HCT116 (cell line): ENCODE measurements at regions of chr18 and their contacts with region 1.

Region 1: DNA sequence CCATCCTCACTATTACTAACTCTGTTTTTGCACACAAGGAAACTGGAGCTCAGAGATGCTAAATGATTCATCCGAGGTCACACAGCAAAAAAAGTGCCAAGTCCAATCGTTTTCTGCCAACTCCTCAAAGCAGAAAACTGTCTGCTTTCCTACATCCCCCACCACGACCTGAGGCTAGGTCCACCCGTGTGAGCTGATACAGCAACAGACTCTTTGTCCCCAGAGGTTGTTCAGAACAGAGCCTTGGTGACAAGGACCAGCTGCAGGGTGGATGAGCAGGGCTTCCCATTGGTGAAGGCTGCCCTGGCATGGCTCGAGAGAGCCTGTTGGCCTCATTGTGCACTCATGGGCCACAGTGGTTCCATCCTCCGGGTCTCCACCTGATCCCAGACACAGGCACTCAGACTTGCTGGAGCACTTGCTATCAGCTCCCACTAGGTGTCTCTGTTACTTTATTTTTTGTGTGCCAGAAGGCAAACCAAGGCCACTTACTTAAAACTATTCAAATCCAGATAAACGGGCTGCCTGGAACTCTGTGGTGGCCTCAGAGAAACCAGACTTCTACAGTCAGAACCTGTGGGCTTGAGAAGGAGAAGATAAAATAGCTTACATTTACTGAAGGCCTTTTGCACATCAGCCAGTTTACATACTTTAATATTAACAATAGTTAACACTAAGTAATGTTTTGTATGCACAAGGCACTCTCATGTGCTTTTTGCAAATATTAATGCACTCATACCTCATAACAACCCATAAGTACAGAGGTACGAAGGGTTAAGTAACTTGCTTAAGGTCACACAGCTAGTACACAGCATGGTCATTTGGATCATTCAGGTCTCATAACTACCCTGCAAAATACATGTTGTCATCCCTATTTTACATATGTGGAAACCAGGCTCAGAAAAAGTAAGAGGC is 62.9 kb upstream of the CTIF start:
- DNase-seq: peak; percentile 67
- ATAC-seq: peak; percentile 98
- H3K4me3 ChIP-seq: no peak overlapping the region
- H3K27ac ChIP-seq: no peak overlapping the region
- H3K4me1 ChIP-seq: no peaks in the 10 kb centered on the region
- H3K27me3 ChIP-seq: no peaks in the 10 kb centered on the region
- CTCF ChIP-seq: peak; percentile 81 to 93 (median 90)
- POLR2A ChIP-seq: no peak
- RAD21 ChIP-seq: peak; percentile 95

Region 2: GRCh38 chr18:48293954-48294898 is 181.7 kb before region 1 on chr18:
- CTCF ChIA-PET with region 1: no interaction called
- POLR2A ChIA-PET with region 1: no interaction called
- RAD21 ChIA-PET with region 1: no interaction called
- intact Hi-C with region 1: no loop called
- DNase-seq: no peak
- ATAC-seq: no peak
- H3K4me3 ChIP-seq: no peak overlapping the region
- H3K27ac ChIP-seq: no peak overlapping the region
- H3K4me1 ChIP-seq: no peaks in the 10 kb centered on the region
- H3K27me3 ChIP-seq: no peaks in the 10 kb centered on the region
- CTCF ChIP-seq: no peak
- POLR2A ChIP-seq: no peak
- RAD21 ChIP-seq: no peak

Region 3: DNA sequence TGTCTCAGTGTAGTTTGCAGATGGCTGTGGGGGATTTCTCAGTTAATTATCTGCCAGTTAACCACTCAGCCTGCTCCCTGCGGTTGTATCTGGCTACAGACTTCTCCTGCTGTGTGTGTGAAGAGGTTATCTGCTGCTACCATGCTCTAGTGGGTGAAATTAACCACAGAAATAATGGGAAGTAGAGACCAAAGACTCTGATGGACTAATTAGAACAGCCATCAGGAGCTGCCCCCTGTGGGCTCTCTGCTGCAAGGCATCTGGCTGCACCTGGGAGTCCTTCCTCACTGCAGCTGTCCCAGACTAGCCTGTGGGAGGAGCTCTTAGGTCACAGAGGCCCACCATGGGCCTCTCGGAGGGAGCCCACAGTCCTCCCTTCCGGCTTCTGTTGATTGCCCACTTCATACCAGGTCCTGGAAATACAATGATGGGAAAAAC is 129.5 kb after region 1 on chr18:
- CTCF ChIA-PET with region 1: interaction called, 13 read pairs
- POLR2A ChIA-PET with region 1: no interaction called
- RAD21 ChIA-PET with region 1: no interaction called
- intact Hi-C with region 1: loop called (anchors 1 kb)
- DNase-seq: peak; percentile 29
- ATAC-seq: peak; percentile 99
- H3K4me3 ChIP-seq: no peak overlapping the region
- H3K27ac ChIP-seq: no peak overlapping the region
- H3K4me1 ChIP-seq: no peaks in the 10 kb centered on the region; a peak in 1 of 4 replicates
- H3K27me3 ChIP-seq: no peaks in the 10 kb centered on the region
- CTCF ChIP-seq: peak; percentile 61 to 95 (median 70)
- POLR2A ChIP-seq: no peak
- RAD21 ChIP-seq: peak; percentile 82

Region 4: GRCh38 chr18:48629730-48630324 is 153.9 kb after region 1 on chr18:
- CTCF ChIA-PET with region 1: no interaction called
- POLR2A ChIA-PET with region 1: no interaction called
- RAD21 ChIA-PET with region 1: no interaction called
- intact Hi-C with region 1: loop called (anchors 10 kb)
- DNase-seq: peak; percentile 76
- ATAC-seq: peak; percentile 94
- H3K4me3 ChIP-seq: no peak overlapping the region
- H3K27ac ChIP-seq: no peak overlapping the region
- H3K4me1 ChIP-seq: peaks cover 15 to 26% of the 10 kb centered on the region in 2 experiments
- H3K27me3 ChIP-seq: no peaks in the 10 kb centered on the region
- CTCF ChIP-seq: no peak
- POLR2A ChIP-seq: no peak
- RAD21 ChIP-seq: no peak

Region 5: GRCh38 chr18:49072524-49072934 is 596.6 kb after region 1 on chr18:
- CTCF ChIA-PET with region 1: no interaction called
- POLR2A ChIA-PET with region 1: no interaction called
- RAD21 ChIA-PET with region 1: no interaction called
- intact Hi-C with region 1: no loop called
- DNase-seq: no peak
- ATAC-seq: no peak
- H3K4me3 ChIP-seq: no peak overlapping the region
- H3K27ac ChIP-seq: no peak overlapping the region
- H3K4me1 ChIP-seq: no peaks in the 10 kb centered on the region
- H3K27me3 ChIP-seq: no peaks in the 10 kb centered on the region
- CTCF ChIP-seq: no peak
- POLR2A ChIP-seq: no peak
- RAD21 ChIP-seq: no peak